A673 (cell line): ENCODE measurements at regions of chr1 and their contacts with region 1.

Region 1: DNA sequence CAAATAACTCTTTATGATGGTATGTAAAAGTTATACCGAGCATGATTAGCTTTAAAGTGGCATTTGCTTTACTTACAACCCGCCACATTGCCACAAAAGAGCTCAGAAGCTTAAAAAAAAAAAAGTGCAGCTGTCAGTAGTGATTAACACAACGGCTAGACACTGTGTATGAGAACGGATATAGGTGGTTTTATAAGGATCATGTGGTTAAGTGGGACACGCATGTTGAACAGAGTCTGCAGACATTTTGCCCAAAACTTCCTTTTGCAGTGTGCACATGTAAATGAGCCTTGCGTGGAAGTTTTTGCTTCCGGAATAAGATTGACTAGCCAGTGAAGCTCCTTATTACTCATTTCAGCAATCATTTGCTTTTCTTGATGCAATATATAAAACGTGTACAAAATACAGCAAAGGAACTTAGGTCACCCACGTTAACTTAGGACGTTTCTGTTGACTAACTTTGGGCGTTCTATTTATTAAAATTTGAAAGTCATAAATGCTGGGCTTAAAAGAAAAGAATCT is 58.7 kb upstream of the RGS1 start:
- DNase-seq: peak; percentile 96
- H3K4me3 ChIP-seq: no peak overlapping the region
- H3K27ac ChIP-seq: peak overlapping the region; percentile 96
- H3K4me1 ChIP-seq: peaks cover 64% of the 10 kb centered on the region
- H3K27me3 ChIP-seq: no peaks in the 10 kb centered on the region
- CTCF ChIP-seq: no peak

Region 2: DNA sequence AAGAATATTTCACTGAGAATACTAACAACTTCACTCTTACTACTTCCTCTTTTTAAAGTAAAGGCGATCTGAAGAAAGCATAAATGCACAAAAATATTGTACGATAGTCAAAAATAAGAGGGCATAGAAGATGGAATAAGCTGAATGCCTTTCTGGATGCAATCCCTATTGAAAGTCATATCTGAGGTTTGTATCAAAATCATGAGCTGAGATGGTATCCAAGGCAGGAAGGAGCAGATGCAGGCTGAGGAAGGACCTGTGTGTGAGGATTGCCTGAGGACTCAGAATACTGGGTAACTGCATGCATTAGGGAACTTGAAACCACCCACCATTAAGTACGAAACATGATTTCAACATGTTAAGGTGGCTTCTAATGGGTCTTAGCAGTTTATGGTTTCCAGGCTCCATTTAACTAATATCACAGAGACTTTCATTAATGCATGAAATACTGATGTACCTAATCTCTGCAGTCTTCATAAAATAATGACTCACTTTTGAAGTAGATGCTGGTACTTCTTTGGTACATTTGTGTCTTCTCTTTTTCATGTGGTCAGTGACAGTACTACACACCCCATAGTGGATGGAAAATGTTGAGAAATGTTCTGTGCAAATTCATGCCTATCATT is 29.2 kb after region 1 on chr1:
- CTCF ChIA-PET with region 1: interaction called, 6 read pairs
- POLR2A ChIA-PET with region 1: interaction called, 3 read pairs
- intact Hi-C with region 1: loop called (anchors 2 kb)
- DNase-seq: peak; percentile 50
- H3K4me3 ChIP-seq: no peak overlapping the region
- H3K27ac ChIP-seq: peak overlapping the region; percentile 92
- H3K4me1 ChIP-seq: peaks cover 80% of the 10 kb centered on the region
- H3K27me3 ChIP-seq: no peaks in the 10 kb centered on the region
- CTCF ChIP-seq: 0 out of 2 replicates have a peak, but pooled peaks have one; percentile 29

Region 3: GRCh38 chr1:192580351-192580962 is 63.6 kb after region 1 on chr1:
- CTCF ChIA-PET with region 1: no interaction called
- POLR2A ChIA-PET with region 1: no interaction called
- intact Hi-C with region 1: loop called (anchors 2 kb)
- DNase-seq: peak; percentile 82
- H3K4me3 ChIP-seq: no peak overlapping the region
- H3K27ac ChIP-seq: peak overlapping the region; percentile 3
- H3K4me1 ChIP-seq: peaks cover 55% of the 10 kb centered on the region
- H3K27me3 ChIP-seq: no peaks in the 10 kb centered on the region
- CTCF ChIP-seq: peak; percentile 77

Region 4: GRCh38 chr1:193201021-193201420 is 684.2 kb after region 1 on chr1:
- CTCF ChIA-PET with region 1: no interaction called
- POLR2A ChIA-PET with region 1: no interaction called
- intact Hi-C with region 1: no loop called
- DNase-seq: no peak
- H3K4me3 ChIP-seq: no peak overlapping the region
- H3K27ac ChIP-seq: no peak overlapping the region
- H3K4me1 ChIP-seq: peaks cover 5% of the 10 kb centered on the region
- H3K27me3 ChIP-seq: no peaks in the 10 kb centered on the region
- CTCF ChIP-seq: no peak